Posterior cingulate gyrus (tissue), 11 donors: ENCODE measurements at regions of chr3 and their contacts with region 1.

Region 1: DNA sequence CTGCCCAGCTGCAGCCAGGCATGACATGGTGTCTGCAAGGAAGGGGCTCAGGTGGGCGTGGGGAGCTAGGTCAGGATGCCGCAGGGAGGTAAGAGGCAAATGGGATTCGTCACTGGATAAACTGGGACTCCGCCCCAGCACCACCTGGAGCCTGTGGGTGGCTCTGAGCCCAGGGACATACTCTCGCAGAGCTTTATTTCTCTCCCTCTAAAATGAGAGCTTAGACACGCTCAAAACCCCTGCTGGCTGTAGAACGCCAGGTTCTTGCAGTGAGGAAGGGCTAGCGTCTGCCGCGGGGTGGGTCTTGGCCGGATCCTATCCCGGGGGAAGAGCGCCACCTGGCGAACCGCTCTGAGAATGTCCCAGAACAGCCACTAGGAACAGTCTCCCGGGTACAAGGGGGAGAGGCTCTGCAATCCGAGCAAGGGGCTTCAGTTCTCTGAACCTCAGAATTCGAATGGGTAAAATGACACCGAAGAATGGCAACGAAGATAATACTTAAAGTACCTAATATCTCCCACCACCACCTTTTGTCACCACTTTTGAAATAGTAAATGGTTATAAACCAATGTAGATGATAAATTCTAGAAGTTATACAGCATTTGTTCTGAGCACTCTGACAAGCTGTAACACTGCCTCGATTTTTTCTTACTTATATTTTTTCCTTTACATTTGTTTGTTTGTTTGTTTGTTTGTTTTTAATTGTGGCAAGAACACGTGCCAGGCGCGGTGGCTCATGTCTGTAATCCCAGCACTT is 53.2 kb upstream of the SRGAP3 start:
- DNase-seq: peak; percentile 74 to 98 (median 88)

Region 2: DNA sequence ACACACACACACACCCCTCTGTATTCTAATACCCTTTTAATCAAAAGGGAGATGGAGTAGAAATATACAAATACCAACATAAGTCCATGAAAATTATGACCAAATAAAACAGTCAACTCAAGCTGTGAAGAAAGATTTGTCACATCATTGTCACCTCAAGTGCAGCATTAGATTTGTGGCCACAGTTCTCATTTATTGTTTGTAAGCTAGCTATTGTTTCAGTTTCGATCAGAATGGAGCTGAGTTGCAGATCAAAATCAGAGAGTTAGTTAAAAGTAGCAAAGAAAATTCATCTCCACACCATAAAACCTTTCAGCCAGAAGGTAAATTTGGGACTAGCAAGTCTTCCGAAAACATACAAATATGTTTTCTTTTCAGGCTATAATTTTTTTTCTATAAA is 1068.7 kb before region 1 on chr3:
- intact Hi-C with region 1: no loop called
- DNase-seq: no peak

Region 3: GRCh38 chr3:8970971-8971589 is 331.5 kb before region 1 on chr3:
- intact Hi-C with region 1: loop called (anchors 1 kb)
- DNase-seq: peak in 8 of 10 donors; percentile 52 to 93 (median 78)

Region 4: DNA sequence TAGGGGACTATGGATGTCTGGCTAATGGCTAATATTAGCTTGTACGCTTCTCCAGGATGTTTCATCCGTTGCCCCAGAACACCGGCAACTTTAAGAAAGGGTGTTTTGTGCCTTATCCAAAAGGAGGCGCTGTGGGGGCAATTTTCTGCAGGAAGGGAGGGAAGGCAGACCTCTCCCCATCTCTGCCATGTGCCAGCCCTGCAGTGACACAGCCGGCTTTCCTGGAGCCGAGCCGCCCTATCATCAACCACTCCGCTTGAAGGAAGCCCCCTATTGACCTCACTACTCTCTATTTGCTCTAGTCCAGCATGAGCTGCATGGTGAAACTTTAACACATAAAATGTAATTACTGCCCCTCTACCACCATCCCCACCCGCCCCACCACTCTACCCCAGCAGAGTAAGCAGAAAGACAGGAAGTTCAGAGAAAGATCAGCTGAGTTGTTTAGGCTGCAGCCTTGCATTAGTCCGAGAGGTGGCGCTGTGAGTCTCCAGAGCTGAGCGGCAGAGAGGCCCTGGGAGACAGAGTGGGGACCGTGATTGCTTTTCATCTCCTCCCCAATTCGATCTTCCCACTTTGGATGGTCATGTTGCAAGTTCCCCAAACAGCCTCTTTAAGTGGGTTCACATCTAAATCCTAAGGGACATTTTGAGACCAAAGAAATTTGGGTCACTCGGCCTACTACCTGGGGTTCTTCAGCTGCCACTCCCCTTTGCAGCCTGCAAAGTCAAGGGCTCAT is 314.8 kb before region 1 on chr3:
- intact Hi-C with region 1: loop called (anchors 5 kb)
- DNase-seq: peak; percentile 60 to 96 (median 78)

Region 5: GRCh38 chr3:9122732-9123364 is 179.8 kb before region 1 on chr3:
- intact Hi-C with region 1: no loop called
- DNase-seq: no peak

Region 6: GRCh38 chr3:9168241-9168741 is 134.3 kb before region 1 on chr3:
- intact Hi-C with region 1: no loop called
- DNase-seq: peak in 1 of 10 donors; percentile 74

Region 7: DNA sequence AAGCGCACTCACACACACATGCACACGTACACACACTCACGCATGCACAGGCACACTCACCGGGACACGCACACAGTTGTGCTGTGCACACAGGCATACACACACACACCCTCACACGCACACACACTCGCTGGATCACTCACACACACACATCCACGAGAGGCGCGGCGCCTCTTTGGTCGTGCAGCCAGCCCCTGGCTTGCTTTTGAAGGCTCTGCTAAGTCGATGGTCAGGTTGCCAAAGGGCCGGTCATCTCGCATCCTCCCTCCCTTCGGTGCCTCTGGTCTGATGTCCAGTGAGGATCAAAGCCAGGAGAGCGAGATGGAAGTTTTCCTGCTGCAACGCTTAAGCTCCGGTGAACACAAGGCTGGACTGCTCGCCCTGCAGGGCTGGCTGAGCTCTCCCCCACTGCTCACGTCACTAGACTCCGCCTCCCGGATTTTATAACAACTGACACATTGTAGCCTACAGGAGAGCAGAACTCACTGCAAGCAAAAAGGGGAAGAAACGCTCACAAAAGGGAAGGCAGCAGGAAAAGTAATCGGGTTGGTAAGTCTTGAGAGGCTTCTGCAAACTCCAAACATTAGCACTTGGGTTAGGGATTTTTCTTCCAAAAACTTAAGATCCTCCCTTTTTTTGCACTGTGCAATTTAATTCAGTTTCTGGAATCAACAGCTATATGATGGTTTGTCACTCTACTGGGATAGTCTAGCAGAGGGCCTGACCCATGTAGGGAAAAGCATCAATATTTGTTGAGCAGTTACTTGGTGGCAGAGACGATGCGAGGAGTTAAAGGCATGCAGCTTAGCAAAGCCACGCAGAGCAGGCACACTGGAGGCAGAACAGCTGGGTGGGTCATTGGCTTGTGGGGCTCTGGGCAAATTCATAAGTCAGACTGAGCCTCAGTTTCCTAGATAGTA is 53.1 kb before region 1 on chr3 and contains the start of gene SRGAP3:
- intact Hi-C with region 1: loop called (anchors 5 kb)
- DNase-seq: peak; percentile 82 to 98 (median 90)